Heart right ventricle (tissue), 16 donors: ENCODE measurements at regions of chr14 and their contacts with region 1.

Region 1: GRCh38 chr14:64294672-64295413 is 672 bp upstream of the ESR2 start:
- DNase-seq: peak; percentile 66 to 84
- ATAC-seq: peak; percentile 89 to 97 (median 94)
- H3K4me3 ChIP-seq: peak overlapping the region in 9 of 10 donors; percentile 18 to 57 (median 52)
- H3K27ac ChIP-seq: no peak overlapping the region
- H3K4me1 ChIP-seq: peaks cover 0 to 20% (median 11%) of the 10 kb centered on the region in 9 donors
- H3K27me3 ChIP-seq: peaks cover 0 to 51% (median 24%) of the 10 kb centered on the region in 7 donors
- CTCF ChIP-seq: peak; percentile 60 to 88 (median 80)

Region 2: DNA sequence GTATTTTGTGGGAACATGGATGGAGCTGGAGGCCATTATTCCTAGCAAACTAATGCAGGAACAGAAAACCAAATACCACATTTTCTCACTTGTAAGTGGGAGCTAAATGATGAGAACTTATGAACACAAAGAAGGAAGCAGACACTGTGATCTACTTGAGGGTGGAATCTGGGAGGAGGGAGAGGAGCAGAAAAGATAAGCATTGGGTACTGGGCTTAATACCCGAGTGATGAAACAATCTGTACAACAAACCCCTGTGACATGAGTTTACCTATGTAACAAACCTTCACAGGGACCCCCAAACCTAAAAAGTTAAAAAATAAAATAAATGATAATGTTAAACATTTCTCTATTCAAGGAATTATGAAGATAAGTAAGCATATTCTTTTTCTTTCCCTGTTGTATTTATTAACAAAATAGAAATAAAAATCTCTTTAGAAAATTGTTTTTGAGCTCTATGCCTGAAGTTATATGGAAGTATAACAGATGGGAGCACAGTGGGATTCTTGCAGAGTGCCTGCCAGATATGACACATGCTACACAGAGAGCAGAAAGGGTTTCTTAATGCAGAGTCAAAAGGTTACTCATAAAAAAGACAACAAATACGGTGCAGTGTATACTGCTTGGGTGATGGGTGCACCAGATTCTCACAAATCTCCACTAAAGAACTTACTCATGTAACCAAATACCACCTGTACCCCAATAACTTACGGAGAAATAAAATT is 494.0 kb before region 1 on chr14:
- intact Hi-C with region 1: loop called in 8 of 10 experiments (anchors 5 to 10 kb)
- DNase-seq: no peak
- ATAC-seq: no peak
- H3K4me3 ChIP-seq: no peak overlapping the region
- H3K27ac ChIP-seq: no peak overlapping the region
- H3K4me1 ChIP-seq: peaks cover 0 to 9% (median 0%) of the 10 kb centered on the region in 9 donors
- H3K27me3 ChIP-seq: no peaks in the 10 kb centered on the region
- CTCF ChIP-seq: no peak

Region 3: GRCh38 chr14:64026600-64026999 is 268.2 kb before region 1 on chr14:
- intact Hi-C with region 1: loop called in 1 of 10 experiments (anchors 10 kb)
- DNase-seq: no peak
- ATAC-seq: no peak
- H3K4me3 ChIP-seq: no peak overlapping the region
- H3K27ac ChIP-seq: no peak overlapping the region
- H3K4me1 ChIP-seq: no peaks in the 10 kb centered on the region
- H3K27me3 ChIP-seq: no peaks in the 10 kb centered on the region
- CTCF ChIP-seq: no peak

Region 4: GRCh38 chr14:64053694-64054528 is 240.9 kb before region 1 on chr14:
- intact Hi-C with region 1: loop called in 3 of 10 experiments (anchors 10 kb)
- DNase-seq: no peak
- ATAC-seq: no peak
- H3K4me3 ChIP-seq: no peak overlapping the region
- H3K27ac ChIP-seq: no peak overlapping the region
- H3K4me1 ChIP-seq: no peaks in the 10 kb centered on the region
- H3K27me3 ChIP-seq: no peaks in the 10 kb centered on the region
- CTCF ChIP-seq: no peak

Region 5: GRCh38 chr14:64159588-64159987 is 135.3 kb before region 1 on chr14:
- intact Hi-C with region 1: loop called in 4 of 10 experiments (anchors 5 to 10 kb)
- DNase-seq: no peak
- ATAC-seq: no peak
- H3K4me3 ChIP-seq: no peak overlapping the region
- H3K27ac ChIP-seq: no peak overlapping the region
- H3K4me1 ChIP-seq: no peaks in the 10 kb centered on the region
- H3K27me3 ChIP-seq: no peaks in the 10 kb centered on the region
- CTCF ChIP-seq: peak in 7 of 9 donors; percentile 7 to 45 (median 20)